ENCODE measurements at regions of chr18 and their contacts with region 1.

Region 1: DNA sequence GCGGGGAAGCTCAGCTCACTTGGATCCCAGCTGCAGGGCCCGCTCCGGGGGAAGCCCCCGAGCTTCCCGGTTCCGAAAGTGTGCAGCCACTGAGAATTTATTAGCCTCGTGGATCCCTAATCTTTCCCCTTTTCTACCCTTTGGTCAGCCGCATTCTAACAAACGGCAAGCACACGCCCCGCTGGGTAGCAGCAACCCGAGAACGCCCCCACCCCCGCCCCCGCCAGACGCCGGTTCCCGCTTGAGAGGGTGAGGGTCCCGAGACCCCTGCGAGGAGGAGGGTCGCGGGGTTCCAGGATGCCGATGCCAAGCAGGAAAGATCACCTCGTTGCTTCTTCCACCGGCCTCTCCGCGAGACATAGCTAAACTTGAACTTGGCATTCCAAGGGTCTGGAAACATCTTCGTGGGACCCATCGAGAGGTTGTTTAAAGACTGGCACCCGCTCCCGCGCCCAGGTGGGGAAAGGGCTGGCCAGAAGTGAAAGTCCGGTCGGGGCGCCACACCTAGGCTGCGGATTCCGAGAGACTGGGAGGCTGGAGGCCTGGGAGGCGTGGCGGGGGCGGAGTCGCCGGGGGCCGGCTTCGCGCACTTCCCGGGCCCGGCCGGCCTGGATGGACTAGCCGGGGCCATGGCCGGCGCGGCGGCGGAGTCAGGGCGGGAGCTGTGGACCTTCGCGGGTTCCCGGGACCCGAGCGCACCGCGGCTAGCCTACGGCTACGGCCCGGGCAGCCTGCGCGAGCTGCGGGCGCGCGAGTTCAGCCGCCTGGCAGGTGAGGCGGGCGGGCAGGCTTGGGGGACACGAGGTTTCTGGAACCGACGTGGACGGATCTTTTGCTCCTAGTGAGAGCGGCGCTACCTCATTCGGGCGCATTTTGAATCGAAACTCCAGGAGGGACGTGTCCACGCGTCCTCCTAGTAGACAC is at the start of gene MOCOS:
- DNase-seq: peak; percentile 79 to 93 (median 89)
- ATAC-seq: peak; percentile 96 to 97
- H3K4me3 ChIP-seq: peak within 1 kb of the TSS; percentile 81
- H3K27ac ChIP-seq: no peak within 1 kb of the TSS
- H3K4me1 ChIP-seq: no peaks in the 10 kb centered on the region
- H3K27me3 ChIP-seq: no peaks in the 10 kb centered on the region
- total RNA-seq, gene MOCOS: 0.57 to 0.64 (median 0.59) TPM

Region 2: DNA sequence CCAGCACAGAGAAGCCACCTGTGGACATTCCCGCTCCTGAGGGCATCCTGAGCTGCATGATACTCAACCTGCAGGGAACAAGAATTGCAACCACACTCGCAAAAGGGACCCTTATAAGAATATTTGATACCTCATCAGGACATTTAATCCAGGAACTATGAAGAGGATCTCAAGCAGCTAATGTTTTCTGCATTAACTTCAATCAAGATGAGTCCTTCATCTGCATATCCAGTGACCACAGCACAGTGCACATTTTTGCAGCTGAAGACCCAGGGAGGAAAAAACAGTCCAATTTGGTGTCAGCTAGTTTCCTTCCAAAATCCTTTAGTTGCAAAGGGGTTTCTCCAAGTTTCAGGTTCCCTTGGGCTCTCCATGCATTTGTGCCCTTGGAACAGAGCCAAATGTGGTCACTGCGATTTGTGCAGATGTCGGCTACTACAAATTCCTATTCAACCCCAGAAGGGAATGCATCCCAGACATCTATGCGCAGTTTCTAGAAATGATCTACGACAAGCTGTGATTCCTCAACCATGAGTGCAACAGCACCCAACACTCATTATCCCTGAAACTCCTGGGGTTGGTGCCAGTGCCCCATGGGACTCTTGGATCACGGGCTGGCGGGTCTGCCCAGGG is 87.0 kb after region 1 on chr18:
- intact Hi-C with region 1: loop called in 1 of 4 experiments (anchors 10 kb)
- DNase-seq: no peak
- ATAC-seq: no peak
- H3K4me3 ChIP-seq: no peak overlapping the region
- H3K27ac ChIP-seq: no peak overlapping the region
- H3K4me1 ChIP-seq: no peaks in the 10 kb centered on the region
- H3K27me3 ChIP-seq: no peaks in the 10 kb centered on the region